Right cardiac atrium (tissue), 5 donors: ENCODE measurements at regions of chr1 and their contacts with region 1.

Region 1: GRCh38 chr1:175035865-175036264 is 12.6 kb upstream of the MRPS14 start:
- DNase-seq: no peak
- ATAC-seq: no peak
- H3K4me3 ChIP-seq: no peak overlapping the region
- H3K27ac ChIP-seq: no peak overlapping the region
- H3K4me1 ChIP-seq: no peaks in the 10 kb centered on the region
- H3K27me3 ChIP-seq: no peaks in the 10 kb centered on the region

Region 2: DNA sequence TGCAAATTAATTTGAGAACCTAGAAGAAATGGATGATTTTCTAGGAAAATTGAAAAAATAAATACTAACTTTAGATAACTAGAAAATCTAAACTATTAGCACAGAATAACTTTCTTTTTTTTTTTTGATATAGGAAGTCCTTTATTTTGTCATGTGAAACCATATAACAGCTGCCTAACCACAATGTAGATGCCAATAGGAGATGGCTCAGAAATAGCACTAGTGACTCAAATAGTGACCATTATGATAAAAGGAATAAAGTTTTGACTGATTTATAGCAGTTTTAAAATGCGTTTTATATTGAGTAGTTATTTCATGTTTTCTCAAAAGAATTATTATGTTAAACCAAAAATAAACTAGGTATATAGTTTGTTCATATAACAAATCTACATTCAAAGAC is 194.1 kb before region 1 on chr1:
- intact Hi-C with region 1: no loop called
- DNase-seq: no peak
- ATAC-seq: no peak
- H3K4me3 ChIP-seq: no peak overlapping the region
- H3K27ac ChIP-seq: no peak overlapping the region
- H3K4me1 ChIP-seq: no peaks in the 10 kb centered on the region
- H3K27me3 ChIP-seq: no peaks in the 10 kb centered on the region

Region 3: GRCh38 chr1:175124861-175125260 is 89.0 kb after region 1 on chr1:
- intact Hi-C with region 1: loop called in 3 of 4 experiments (anchors 5 kb)
- DNase-seq: no peak
- ATAC-seq: peak in 1 of 2 donors; percentile 36
- H3K4me3 ChIP-seq: no peak overlapping the region
- H3K27ac ChIP-seq: no peak overlapping the region
- H3K4me1 ChIP-seq: peaks cover 15% of the 10 kb centered on the region
- H3K27me3 ChIP-seq: no peaks in the 10 kb centered on the region

Region 4: GRCh38 chr1:175129997-175130648 is 94.3 kb after region 1 on chr1:
- intact Hi-C with region 1: loop called in 2 of 4 experiments (anchors 5 kb)
- DNase-seq: no peak
- ATAC-seq: peak; percentile 28 to 77
- H3K4me3 ChIP-seq: no peak overlapping the region
- H3K27ac ChIP-seq: peak overlapping the region; percentile 88
- H3K4me1 ChIP-seq: peaks cover 24% of the 10 kb centered on the region
- H3K27me3 ChIP-seq: no peaks in the 10 kb centered on the region